GM12878 (cell line): ENCODE measurements at regions of chr11 and their contacts with region 1.

Region 1: GRCh38 chr11:67353317-67354074 is at the start of gene POLD4:
- DNase-seq: peak; percentile 95
- ATAC-seq: peak; percentile 85
- H3K4me3 ChIP-seq: peak within 1 kb of the TSS; percentile 98
- H3K27ac ChIP-seq: peak within 1 kb of the TSS; percentile 99
- H3K4me1 ChIP-seq: peaks cover 52% of the 10 kb centered on the region
- H3K27me3 ChIP-seq: no peaks in the 10 kb centered on the region; a peak in 1 of 4 replicates
- CTCF ChIP-seq: no peak
- EP300 ChIP-seq: peak; percentile 58 to 67; a peak in 2 of 4 replicates
- POLR2A ChIP-seq: peak; percentile 97
- RAD21 ChIP-seq: no peak
- polyA plus RNA-seq, gene POLD4: 8.1 to 23.5 TPM

Region 2: DNA sequence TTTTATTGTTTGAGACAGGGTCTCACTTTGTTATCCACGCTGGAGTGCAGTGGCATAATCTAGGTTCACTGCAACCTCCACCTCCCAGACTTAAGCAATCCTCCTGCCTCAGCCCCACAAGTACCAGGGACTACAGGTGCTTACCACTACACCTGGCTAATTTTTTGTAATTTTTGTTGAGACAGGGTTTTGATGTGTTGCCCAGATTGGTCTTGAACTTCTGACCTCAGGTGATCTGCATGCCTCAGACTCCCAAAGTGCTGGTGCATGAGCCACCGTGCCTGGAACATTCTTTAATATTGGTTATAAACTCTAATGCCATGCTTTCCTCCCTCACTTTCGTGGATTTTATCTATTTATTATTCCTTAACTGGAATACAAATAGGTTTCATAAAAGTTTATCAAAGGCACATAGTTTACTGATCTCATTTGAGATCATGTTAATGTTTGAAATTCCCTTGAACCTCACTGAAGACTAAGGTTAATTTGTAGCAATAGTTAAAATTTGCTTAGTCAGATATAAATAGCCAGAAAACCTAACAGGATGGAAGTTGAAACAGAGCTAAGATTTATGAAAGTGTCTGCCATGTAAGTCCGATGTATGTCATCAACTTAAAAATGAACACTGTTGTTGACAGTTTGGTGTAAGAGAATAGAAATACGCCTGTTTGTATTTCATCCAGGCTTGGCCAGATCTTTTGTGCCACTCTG is 206.8 kb before region 1 on chr11:
- CTCF ChIA-PET with region 1: no interaction called
- POLR2A ChIA-PET with region 1: no interaction called
- RAD21 ChIA-PET with region 1: no interaction called
- SMC1A ChIA-PET with region 1: no interaction called
- in situ Hi-C with region 1: no loop called
- intact Hi-C with region 1: no loop called
- DNase-seq: no peak
- ATAC-seq: no peak
- H3K4me3 ChIP-seq: no peak overlapping the region
- H3K27ac ChIP-seq: no peak overlapping the region
- H3K4me1 ChIP-seq: no peaks in the 10 kb centered on the region
- H3K27me3 ChIP-seq: no peaks in the 10 kb centered on the region
- CTCF ChIP-seq: no peak
- EP300 ChIP-seq: no peak
- POLR2A ChIP-seq: no peak
- RAD21 ChIP-seq: no peak

Region 3: DNA sequence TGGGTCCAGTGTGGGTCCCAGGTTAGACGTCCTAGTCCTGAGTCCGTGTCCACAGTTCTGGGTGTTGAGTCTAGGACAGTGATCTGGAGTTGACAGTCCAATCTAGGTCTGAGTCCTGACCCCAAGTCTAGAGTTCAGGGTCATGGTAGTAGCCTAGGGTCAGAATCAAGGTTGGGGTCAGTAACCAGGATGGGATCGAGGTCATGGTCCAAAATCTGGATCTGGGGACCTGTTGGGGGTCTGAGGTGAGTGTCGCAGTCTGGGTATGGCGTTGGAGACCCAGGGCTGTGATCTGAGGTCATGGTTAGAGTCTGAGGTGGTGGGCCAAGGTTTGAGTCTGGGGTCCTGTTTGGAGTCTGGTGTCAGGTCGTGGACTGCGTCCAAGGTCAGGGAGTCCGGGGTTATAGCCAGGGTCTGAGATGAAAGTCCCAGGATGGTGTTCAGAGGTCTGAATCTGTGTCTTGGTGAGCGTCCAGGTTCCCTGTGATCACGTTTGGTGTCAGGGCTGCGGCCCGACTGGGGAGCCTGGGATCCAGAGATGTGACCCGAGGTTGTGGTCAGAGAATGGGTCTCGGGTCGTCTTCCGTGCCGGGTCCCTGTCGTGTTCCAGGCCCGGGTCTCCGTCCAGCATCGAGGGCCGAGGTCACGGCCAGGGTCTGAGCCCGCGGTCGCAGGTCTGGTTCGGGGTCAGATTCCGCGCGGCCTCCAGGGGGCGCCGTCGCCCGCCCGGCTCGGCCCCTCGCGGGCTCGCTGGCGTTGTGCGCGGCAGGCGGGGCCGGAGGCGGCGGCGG is 87.7 kb before region 1 on chr11:
- CTCF ChIA-PET with region 1: interaction called, 12 read pairs
- POLR2A ChIA-PET with region 1: interaction called, 33 read pairs
- RAD21 ChIA-PET with region 1: interaction called, 11 read pairs
- SMC1A ChIA-PET with region 1: interaction called, 11 read pairs
- in situ Hi-C with region 1: no loop called
- intact Hi-C with region 1: no loop called
- DNase-seq: no peak
- ATAC-seq: peak; percentile 54
- H3K4me3 ChIP-seq: no peak overlapping the region
- H3K27ac ChIP-seq: 0 out of 2 replicates have a peak overlapping the region, but pooled peaks have one; percentile 33
- H3K4me1 ChIP-seq: peaks cover 36% of the 10 kb centered on the region
- H3K27me3 ChIP-seq: no peaks in the 10 kb centered on the region
- CTCF ChIP-seq: peak; percentile 63 to 84 (median 70); a peak in 5 of 6 replicates
- EP300 ChIP-seq: no peak
- POLR2A ChIP-seq: no peak
- RAD21 ChIP-seq: peak; percentile 80

Region 4: GRCh38 chr11:67317205-67317887 is 36.1 kb before region 1 on chr11:
- CTCF ChIA-PET with region 1: interaction called, 72 read pairs
- POLR2A ChIA-PET with region 1: interaction called, 10 read pairs
- RAD21 ChIA-PET with region 1: interaction called, 75 read pairs
- SMC1A ChIA-PET with region 1: interaction called, 31 read pairs
- in situ Hi-C with region 1: no loop called
- intact Hi-C with region 1: no loop called
- DNase-seq: peak; percentile 92
- ATAC-seq: peak; percentile 88
- H3K4me3 ChIP-seq: peak overlapping the region; percentile 80
- H3K27ac ChIP-seq: peak overlapping the region; percentile 85
- H3K4me1 ChIP-seq: peaks cover 3% of the 10 kb centered on the region
- H3K27me3 ChIP-seq: no peaks in the 10 kb centered on the region
- CTCF ChIP-seq: peak; percentile 87 to 97 (median 96); a peak in 5 of 6 replicates
- EP300 ChIP-seq: no peak
- POLR2A ChIP-seq: peak; percentile 71
- RAD21 ChIP-seq: peak; percentile 88

Region 5: GRCh38 chr11:67373925-67374618 is 20.6 kb after region 1 on chr11:
- CTCF ChIA-PET with region 1: interaction called, 1,301 read pairs
- POLR2A ChIA-PET with region 1: interaction called, 183 read pairs
- RAD21 ChIA-PET with region 1: interaction called, 525 read pairs
- SMC1A ChIA-PET with region 1: interaction called, 646 read pairs
- in situ Hi-C with region 1: no loop called
- intact Hi-C with region 1: loop called (anchors 2 kb)
- DNase-seq: no peak
- ATAC-seq: peak; percentile 58
- H3K4me3 ChIP-seq: no peak overlapping the region
- H3K27ac ChIP-seq: no peak overlapping the region
- H3K4me1 ChIP-seq: peaks cover 18% of the 10 kb centered on the region
- H3K27me3 ChIP-seq: peaks cover 2 to 4% of the 10 kb centered on the region in 2 experiments; a peak in 3 of 4 replicates
- CTCF ChIP-seq: peak; percentile 52 to 65 (median 56)
- EP300 ChIP-seq: no peak
- POLR2A ChIP-seq: no peak
- RAD21 ChIP-seq: peak; percentile 36; the same call in 1 of the 2 replicates

Region 6: DNA sequence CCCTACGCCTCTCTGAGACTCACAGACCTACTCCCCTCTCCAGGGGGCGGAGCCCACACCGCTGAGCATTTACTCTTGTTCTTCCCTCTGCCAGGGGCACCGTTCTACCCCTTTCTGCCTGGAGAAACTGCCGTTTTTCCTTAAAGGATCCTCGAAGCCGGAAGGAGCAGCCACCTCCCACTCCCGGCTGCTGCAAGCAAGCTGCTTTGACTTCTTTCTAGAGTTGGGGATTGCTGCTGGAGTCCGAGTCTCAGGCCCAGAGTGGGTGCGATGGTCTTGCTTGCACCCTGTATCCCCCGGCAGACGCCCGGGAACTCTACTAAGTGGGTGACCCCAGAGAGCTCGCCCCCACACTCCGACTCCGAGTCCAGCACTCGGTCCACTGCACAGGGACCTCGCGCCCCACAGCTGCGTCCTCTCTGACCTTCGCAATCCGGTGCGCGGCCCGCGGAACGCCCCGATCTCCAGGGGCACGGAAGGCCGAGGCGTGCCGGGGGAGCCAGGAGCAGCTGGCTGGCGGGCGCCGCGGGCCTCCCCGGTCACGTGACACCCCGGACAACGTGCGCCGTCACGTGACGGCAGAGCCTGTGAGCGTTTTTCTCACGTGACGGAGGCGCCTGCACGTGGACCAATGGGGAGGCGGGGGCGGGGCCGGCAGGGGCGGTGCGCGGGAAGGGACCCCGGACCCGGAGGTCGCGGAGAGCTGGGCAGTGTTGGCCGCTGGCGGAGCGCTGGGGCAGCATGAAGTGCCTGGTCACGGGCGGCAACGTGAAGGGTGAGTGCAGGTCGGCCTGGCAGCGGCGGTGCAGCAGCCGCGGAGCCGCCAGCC is 38.0 kb after region 1 on chr11 and contains the start of gene RAD9A:
- CTCF ChIA-PET with region 1: interaction called, 1,301 read pairs
- POLR2A ChIA-PET with region 1: interaction called, 16 read pairs
- RAD21 ChIA-PET with region 1: interaction called, 525 read pairs
- SMC1A ChIA-PET with region 1: interaction called, 646 read pairs
- in situ Hi-C with region 1: loop called (anchors 5 kb)
- intact Hi-C with region 1: no loop called
- DNase-seq: no peak
- ATAC-seq: peak; percentile 90
- H3K4me3 ChIP-seq: peak within 1 kb of the TSS; percentile 97
- H3K27ac ChIP-seq: peak within 1 kb of the TSS; percentile 78
- H3K4me1 ChIP-seq: peaks cover 7% of the 10 kb centered on the region
- H3K27me3 ChIP-seq: no peaks in the 10 kb centered on the region
- CTCF ChIP-seq: no peak
- EP300 ChIP-seq: peak; percentile 22 to 64; a peak in 2 of 4 replicates
- POLR2A ChIP-seq: peak; percentile 83
- RAD21 ChIP-seq: no peak
- polyA plus RNA-seq, gene RAD9A: 1.1 to 3.6 TPM

Region 7: DNA sequence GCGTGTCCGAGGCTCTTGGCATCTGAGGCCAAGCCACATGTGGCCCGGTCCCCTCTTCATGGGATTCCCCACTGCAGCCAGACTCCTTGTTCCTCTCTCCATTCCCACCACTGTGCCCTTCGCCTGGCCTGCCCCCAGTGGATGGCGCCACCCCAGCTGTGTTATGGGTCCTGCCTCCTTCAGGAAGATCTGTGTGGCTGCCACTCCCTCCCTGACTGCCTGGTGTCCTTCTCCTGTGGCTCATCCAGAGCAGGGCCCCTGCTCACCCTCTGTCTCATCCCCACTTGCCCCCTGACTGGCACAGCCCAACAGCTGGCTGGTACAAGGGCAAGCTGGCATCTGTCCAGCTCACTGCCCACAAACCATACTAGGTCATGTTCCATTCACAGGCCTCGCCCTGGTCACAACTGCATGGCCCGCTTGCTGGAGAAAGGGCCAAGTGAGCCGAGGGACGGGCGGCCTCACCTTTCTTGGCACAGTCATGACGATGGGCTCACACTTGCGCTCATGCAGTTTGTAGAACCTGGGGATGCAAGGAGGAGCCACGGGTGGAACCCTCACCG is 85.9 kb after region 1 on chr11:
- CTCF ChIA-PET with region 1: no interaction called
- POLR2A ChIA-PET with region 1: interaction called, 20 read pairs
- RAD21 ChIA-PET with region 1: interaction called, 23 read pairs
- SMC1A ChIA-PET with region 1: no interaction called
- in situ Hi-C with region 1: no loop called
- intact Hi-C with region 1: no loop called
- DNase-seq: no peak
- ATAC-seq: no peak
- H3K4me3 ChIP-seq: peak overlapping the region; percentile 90
- H3K27ac ChIP-seq: peak overlapping the region; percentile 99
- H3K4me1 ChIP-seq: peaks cover 29% of the 10 kb centered on the region
- H3K27me3 ChIP-seq: no peaks in the 10 kb centered on the region
- CTCF ChIP-seq: peak; percentile 23 to 49 (median 24); a peak in 4 of 6 replicates
- EP300 ChIP-seq: no peak
- POLR2A ChIP-seq: no peak
- RAD21 ChIP-seq: no peak

Region 8: DNA sequence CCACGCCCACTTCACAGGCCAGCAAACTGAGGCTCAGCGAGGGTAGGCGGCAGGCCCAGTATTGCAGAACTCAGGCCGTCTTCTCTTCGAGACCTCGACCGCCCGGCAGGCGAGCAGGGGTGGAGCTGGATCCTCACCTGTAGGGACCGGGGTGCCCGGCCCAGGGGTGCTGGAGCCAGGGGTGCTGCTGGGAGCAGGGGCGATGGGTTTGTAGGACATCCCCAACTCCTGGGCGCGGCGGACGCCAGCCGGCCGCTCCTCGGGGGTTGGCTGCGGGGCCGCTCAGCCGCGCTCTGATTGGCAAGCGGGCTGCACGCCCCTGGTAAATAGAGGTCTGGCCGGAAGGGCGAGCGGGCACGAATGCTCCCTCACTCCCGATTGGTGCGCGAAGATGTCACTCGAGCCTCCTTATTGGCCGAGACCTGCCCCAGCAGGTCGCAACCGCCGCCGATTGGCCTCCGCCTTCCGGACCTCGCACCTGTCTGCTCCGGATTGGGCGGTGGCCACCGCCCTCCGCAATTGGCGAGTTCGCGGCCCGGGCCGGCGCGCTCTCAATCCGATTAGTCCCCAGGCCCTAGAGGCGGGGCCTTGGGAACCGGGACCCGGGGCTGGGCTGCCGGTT is 154.5 kb after region 1 on chr11 and contains the start of gene CDK2AP2:
- CTCF ChIA-PET with region 1: interaction called, 4 read pairs
- POLR2A ChIA-PET with region 1: interaction called, 3 read pairs
- RAD21 ChIA-PET with region 1: interaction called, 3 read pairs
- SMC1A ChIA-PET with region 1: interaction called, 3 read pairs
- in situ Hi-C with region 1: no loop called
- intact Hi-C with region 1: loop called (anchors 2 kb)
- DNase-seq: peak; percentile 99
- ATAC-seq: peak; percentile 86
- H3K4me3 ChIP-seq: peak within 1 kb of the TSS; percentile 82
- H3K27ac ChIP-seq: peak within 1 kb of the TSS; percentile 94
- H3K4me1 ChIP-seq: peaks cover 27% of the 10 kb centered on the region
- H3K27me3 ChIP-seq: no peaks in the 10 kb centered on the region; a peak in 1 of 4 replicates
- CTCF ChIP-seq: no peak
- EP300 ChIP-seq: no peak
- POLR2A ChIP-seq: peak; percentile 86
- RAD21 ChIP-seq: no peak
- polyA plus RNA-seq, gene CDK2AP2: 8.0 to 18.0 TPM